Common myeloid progenitor, CD34-positive (primary cell): ENCODE measurements at regions of chr18 and their contacts with region 1.

Region 1: GRCh38 chr18:789397-789796 is 22.6 kb downstream of the YES1 start:
- DNase-seq: no peak
- H3K4me3 ChIP-seq: no peak overlapping the region
- H3K27ac ChIP-seq: no peak overlapping the region
- H3K4me1 ChIP-seq: peaks cover 0 to 18% (median 14%) of the 10 kb centered on the region in 4 experiments
- H3K27me3 ChIP-seq: no peaks in the 10 kb centered on the region

Region 2: DNA sequence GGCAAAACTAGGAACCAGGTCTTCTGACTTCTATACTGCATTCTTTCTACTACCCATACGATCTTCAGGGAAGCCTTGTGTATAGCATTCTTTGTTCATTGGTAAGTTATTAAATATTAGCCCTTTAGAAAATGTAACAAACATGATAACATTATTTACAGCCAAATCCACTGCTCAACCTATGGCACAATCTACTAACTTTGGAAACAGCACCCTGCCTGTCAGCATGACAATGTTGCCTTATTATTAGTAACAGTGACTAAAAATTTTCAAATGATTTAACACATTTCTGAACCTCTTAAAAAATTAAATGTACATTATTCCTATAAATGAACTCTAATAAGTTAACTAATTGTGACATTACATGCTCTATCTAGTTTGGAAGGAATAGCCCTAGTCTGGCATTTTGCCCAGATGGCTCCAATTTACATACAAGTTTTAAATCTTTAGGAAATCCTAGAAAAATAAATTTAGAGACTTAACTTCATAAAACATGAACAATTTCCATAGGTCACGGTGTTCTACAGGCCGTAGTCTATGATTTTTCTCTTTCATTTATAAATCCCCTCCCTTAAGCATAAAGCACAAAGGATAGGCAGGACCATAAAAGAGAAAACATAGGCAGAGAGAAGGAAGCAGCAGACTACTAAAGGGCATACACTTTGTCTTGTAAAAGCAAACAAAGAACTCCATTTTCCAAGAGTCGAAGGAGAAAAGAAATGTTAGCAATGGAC is 11.0 kb before region 1 on chr18:
- CTCF ChIA-PET with region 1: interaction called, 5 read pairs
- POLR2A ChIA-PET with region 1: interaction called, 11 read pairs
- DNase-seq: no peak
- H3K4me3 ChIP-seq: no peak overlapping the region
- H3K27ac ChIP-seq: peak overlapping the region in 1 of 2 experiments; percentile 43
- H3K4me1 ChIP-seq: peaks cover 0 to 8% (median 6%) of the 10 kb centered on the region in 4 experiments
- H3K27me3 ChIP-seq: no peaks in the 10 kb centered on the region